ENCODE measurements at regions of chr4 and their contacts with region 1.

Region 1: GRCh38 chr4:25367004-25367621 is 9.9 kb upstream of the ANAPC4 start:
- DNase-seq: no peak
- H3K4me3 ChIP-seq: no peak overlapping the region
- CTCF ChIP-seq: no peak

Region 2: DNA sequence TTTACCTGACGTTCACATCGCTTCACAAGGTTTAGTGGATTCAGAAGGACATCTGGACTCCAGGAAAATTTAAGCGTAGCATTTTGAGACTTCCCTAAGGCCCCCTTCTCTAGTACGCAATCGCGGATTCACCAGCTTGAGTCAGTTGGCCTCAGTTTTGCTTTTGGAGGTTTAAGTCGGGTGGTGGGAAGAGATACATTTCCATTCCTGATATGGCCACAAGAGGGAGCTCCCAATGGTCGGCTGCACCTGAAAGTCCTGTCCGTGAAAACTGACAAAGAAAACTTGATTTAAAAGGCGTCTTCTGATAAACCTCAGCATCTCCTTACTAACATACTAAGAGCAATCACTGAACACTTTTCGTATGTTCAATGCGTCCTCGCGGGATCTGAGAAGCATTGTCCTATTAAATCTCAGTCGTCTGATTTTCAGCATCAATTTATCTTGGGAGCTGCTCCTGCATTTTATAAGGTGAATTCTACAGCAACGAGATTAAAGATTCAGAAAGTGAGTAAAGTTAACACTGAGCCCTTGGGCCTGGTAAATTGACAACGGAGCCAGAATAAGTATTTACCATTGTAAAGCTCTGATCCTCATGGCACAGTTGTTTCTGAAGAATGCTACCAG is 386.9 kb before region 1 on chr4:
- CTCF ChIA-PET with region 1: interaction called, 68 read pairs
- POLR2A ChIA-PET with region 1: no interaction called
- DNase-seq: peak; percentile 24
- H3K4me3 ChIP-seq: peak overlapping the region; percentile 35
- CTCF ChIP-seq: peak; percentile 70

Region 3: GRCh38 chr4:25159884-25160713 is 207.0 kb before region 1 on chr4 and contains the start of gene SEPSECS:
- CTCF ChIA-PET with region 1: interaction called, 24 read pairs
- POLR2A ChIA-PET with region 1: no interaction called
- DNase-seq: peak; percentile 70
- H3K4me3 ChIP-seq: peak within 1 kb of the TSS; percentile 84
- CTCF ChIP-seq: no peak

Region 4: GRCh38 chr4:25180524-25181131 is 186.5 kb before region 1 on chr4:
- CTCF ChIA-PET with region 1: interaction called, 81 read pairs
- POLR2A ChIA-PET with region 1: no interaction called
- DNase-seq: no peak
- H3K4me3 ChIP-seq: no peak overlapping the region
- CTCF ChIP-seq: peak; percentile 56

Region 5: DNA sequence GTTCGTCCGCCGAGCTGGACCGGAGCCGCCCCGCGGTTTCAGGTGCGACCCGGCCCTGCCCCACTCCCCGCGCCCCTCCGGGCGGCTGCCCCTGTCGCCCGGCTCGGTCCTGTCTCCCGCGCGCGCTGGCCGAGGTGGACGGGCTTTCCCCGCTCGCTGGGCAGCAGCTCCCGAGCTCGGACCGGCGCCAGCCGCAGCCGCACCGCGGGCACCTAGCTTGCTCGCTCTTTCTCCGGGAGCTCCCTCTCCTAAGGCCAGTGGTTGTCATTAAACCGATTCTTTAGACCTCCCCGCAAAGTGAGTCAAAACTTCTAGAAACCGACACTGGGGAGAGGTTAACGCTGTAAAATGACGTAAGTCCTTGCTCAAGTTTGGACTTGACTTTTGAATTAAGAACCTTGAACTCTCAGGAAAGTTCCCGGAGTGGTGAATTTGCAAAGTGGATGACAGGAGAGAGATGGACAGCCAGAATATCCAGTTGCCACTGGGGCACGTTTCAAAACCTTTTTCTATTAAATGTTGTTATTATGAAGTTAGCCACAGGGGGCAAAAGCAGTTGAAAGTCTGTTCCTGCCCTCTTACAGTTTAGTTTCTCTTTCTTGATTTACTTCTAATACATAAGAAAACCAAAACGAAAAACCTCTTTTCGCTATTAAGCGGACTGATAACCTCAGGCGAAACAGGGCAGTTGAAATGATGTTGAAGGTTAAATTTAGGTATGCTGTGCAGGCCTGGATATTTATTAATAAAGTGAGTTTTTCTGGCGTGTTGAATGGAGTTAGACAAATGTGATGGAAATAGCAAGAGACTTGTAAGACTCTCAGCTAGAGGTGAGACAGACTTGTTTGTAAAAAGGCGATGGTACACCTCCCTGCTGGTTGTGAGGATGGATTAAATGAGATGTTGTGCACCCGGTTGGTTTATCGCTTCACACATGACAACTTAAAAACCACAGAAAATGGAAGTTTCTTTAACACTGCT is 132.4 kb before region 1 on chr4:
- CTCF ChIA-PET with region 1: interaction called, 14 read pairs
- POLR2A ChIA-PET with region 1: no interaction called
- DNase-seq: peak; percentile 45
- H3K4me3 ChIP-seq: peak overlapping the region; percentile 91
- CTCF ChIP-seq: peak; percentile 42

Region 6: GRCh38 chr4:25320773-25321172 is 46.3 kb before region 1 on chr4:
- CTCF ChIA-PET with region 1: interaction called, 14 read pairs
- POLR2A ChIA-PET with region 1: no interaction called
- DNase-seq: peak; percentile 67
- H3K4me3 ChIP-seq: no peak overlapping the region
- CTCF ChIP-seq: no peak

Region 7: DNA sequence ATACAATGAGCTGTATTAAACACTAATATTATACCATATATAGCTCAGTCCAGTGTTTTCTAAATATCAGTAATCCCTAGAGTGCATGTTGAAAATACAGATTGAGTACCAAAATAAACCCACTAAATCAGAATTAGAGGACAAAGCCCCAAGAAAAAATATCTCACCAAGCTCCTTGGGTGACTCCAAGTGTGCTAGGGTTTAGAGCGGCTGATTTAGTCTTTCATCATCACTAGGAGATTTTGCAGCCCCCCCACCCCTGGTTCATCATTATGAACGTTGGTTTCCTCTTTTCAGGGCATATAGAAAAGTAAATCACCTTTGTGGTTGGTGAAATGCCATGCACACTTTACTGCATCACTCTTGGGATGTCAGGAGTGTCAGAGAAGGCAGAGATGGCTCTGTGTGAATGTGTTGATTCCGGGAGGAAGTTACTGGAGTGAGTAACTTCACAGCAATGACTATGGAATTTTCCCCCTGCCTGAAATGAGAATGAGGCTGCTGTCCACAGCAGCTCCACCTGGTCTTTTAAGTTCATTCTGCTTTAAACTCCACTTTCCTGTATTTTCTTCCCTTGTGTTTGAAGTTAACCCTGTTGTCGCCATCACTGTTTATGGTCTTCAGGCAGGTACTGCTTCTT is 15.2 kb before region 1 on chr4:
- CTCF ChIA-PET with region 1: interaction called, 58 read pairs
- POLR2A ChIA-PET with region 1: interaction called, 3 read pairs
- DNase-seq: peak; percentile 28
- H3K4me3 ChIP-seq: no peak overlapping the region
- CTCF ChIP-seq: no peak

Region 8: DNA sequence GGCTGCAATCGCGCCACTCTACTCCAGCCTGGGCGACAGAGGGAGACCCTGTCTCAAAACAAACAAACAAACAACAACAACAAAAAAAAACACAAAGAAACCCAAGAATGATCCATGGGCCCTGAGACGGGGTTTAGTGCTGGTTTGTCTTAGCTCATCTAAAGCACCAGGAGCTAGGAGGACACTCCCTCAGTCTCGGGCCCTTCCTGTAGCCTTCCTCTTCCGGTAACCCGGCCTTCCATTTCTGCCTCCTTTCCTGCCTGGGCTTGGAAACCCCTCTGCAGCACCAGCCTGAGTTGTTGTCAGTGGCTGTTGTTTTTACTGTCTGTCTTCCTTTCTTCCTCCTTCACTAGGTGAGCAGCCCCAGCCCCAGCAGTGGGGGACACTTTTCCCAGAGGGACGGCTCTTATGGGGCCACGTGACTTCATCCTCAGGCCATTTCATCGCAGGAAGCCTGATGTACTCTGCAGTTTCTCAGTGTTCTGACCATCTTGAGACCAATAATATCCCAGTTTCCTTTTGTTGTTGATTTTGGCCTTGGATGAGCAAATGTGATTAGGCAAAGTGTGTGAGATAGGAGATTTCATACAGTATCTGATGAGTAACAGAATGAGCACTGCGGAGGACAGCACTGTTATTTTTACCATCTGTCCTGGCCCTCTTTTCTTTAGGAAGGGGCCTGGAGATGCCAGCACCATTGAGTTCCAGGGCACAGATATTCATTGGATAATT is 100.0 kb after region 1 on chr4:
- CTCF ChIA-PET with region 1: no interaction called
- POLR2A ChIA-PET with region 1: no interaction called
- DNase-seq: no peak
- H3K4me3 ChIP-seq: no peak overlapping the region
- CTCF ChIP-seq: no peak

Region 9: GRCh38 chr4:26183017-26183416 is 815.9 kb after region 1 on chr4:
- CTCF ChIA-PET with region 1: no interaction called
- POLR2A ChIA-PET with region 1: no interaction called
- DNase-seq: no peak
- H3K4me3 ChIP-seq: no peak overlapping the region
- CTCF ChIP-seq: no peak